ENCODE measurements at regions of chr6 and their contacts with region 1.

Region 1: DNA sequence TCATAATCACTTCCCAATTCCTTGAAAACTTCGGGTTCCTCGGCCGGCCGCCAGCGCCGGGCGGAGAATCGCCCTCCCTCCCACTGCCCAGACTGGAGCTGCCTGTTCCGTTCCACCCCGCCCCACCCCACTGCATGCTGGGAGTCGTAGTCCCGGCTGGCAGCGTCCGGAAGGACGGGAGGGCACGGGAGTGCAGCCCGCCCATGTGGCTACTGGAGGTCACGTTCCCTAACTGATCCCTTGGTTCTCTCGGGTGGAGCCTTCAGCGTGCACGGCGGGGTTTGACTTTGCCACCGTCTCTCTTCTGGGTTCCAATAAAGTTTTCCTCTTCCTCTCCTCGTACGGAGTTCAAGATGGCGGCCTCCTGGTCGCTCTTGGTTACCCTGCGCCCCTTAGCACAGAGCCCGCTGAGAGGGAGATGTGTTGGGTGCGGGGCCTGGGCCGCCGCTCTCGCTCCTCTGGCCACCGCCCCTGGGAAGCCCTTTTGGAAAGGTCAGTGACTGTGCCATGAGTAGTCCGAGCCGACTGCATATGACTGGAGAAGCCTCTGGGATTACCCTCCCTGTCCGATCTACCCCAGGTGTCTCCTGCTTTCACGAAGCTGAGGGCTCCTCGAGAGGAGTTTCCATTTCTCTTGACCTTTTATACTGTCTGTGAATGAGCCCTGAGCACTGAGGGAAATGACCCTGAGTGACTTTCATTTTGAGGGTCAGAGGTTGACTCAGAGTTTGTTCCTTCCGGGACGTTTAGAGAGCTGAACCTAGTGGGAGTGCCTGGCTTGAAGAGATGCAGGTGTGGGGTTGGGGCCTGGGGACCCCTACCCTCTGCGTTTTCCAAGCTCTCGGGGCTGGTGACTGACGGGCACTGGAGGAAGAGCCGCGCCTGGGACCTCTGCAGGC is at the start of gene AFG1L:
- DNase-seq: peak; percentile 90
- H3K4me3 Mint-ChIP-seq: peak within 1 kb of the TSS; percentile 93
- H3K27ac Mint-ChIP-seq: peak within 1 kb of the TSS; percentile 97
- H3K4me1 Mint-ChIP-seq: peaks cover 25% of the 10 kb centered on the region
- H3K27me3 Mint-ChIP-seq: no peaks in the 10 kb centered on the region
- total RNA-seq, gene AFG1L: 4.5 to 4.7 TPM

Region 2: DNA sequence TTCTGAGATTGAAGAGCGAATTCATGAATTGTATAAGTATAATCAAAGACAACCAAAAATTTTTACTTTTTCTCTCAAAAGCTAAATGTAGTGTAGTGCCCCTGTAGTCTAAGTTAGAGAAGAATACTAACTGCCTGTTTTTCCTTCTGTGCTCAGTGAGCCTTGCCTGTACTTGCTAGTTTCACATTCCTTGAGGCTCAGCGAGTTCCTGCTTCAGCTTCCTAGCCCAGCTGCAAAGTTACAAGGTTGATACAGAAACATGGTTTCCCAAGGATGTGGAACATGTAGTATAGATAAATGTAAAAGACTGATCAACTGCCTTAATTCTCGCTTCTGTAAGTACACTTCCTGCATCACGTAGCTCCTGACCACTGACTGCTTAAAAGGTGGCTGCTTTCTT is 303.9 kb before region 1 on chr6:
- CTCF ChIA-PET with region 1: no interaction called
- POLR2A ChIA-PET with region 1: no interaction called
- DNase-seq: no peak
- H3K4me3 Mint-ChIP-seq: no peak overlapping the region
- H3K27ac Mint-ChIP-seq: no peak overlapping the region
- H3K4me1 Mint-ChIP-seq: peaks cover 9% of the 10 kb centered on the region
- H3K27me3 Mint-ChIP-seq: peaks cover 3% of the 10 kb centered on the region

Region 3: DNA sequence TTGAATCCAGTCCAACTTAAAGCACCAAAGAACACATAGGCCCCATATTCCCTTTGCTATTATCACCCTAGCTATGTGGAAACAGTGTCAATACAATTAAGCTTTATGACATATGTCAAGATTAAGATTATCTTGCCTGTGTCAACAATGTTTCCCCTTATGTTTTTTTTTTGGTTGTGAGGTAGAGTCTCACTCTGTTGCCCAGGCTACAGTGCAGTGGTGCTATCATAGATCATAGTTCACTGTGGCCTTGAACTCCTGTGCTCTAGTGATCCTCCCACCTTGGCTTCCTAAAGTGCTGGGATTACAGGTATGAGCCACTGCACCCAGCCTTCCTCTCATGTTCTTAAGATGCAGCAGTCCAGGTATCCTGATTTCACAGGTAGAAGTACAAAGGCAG is 17.6 kb after region 1 on chr6:
- CTCF ChIA-PET with region 1: no interaction called
- POLR2A ChIA-PET with region 1: interaction called, 31 read pairs
- DNase-seq: no peak
- H3K4me3 Mint-ChIP-seq: no peak overlapping the region
- H3K27ac Mint-ChIP-seq: no peak overlapping the region
- H3K4me1 Mint-ChIP-seq: peaks cover 11% of the 10 kb centered on the region
- H3K27me3 Mint-ChIP-seq: no peaks in the 10 kb centered on the region

Region 4: DNA sequence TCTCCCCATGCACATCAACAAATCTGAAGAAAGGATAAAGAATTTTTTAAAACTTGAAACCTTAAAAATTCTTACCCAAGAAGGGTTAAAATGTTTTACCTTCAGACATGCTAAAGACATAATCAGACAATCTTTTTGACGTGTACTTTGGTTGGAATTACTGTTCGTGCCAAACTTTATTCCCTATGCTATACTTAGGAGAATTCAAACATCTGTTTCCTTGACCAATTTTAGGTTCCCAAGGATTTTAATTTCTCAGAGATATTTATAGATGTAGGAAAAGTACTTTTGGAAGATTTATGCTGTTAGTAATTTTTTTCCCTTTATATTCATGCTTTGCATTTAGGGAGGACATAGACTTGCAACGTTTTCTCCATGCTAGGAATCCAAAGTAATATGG is 108.3 kb after region 1 on chr6:
- CTCF ChIA-PET with region 1: no interaction called
- POLR2A ChIA-PET with region 1: no interaction called
- DNase-seq: no peak
- H3K4me3 Mint-ChIP-seq: no peak overlapping the region
- H3K27ac Mint-ChIP-seq: no peak overlapping the region
- H3K4me1 Mint-ChIP-seq: no peaks in the 10 kb centered on the region
- H3K27me3 Mint-ChIP-seq: no peaks in the 10 kb centered on the region